Transverse colon (tissue), 4 donors: ENCODE measurements at regions of chrX and their contacts with region 1.

Region 1: DNA sequence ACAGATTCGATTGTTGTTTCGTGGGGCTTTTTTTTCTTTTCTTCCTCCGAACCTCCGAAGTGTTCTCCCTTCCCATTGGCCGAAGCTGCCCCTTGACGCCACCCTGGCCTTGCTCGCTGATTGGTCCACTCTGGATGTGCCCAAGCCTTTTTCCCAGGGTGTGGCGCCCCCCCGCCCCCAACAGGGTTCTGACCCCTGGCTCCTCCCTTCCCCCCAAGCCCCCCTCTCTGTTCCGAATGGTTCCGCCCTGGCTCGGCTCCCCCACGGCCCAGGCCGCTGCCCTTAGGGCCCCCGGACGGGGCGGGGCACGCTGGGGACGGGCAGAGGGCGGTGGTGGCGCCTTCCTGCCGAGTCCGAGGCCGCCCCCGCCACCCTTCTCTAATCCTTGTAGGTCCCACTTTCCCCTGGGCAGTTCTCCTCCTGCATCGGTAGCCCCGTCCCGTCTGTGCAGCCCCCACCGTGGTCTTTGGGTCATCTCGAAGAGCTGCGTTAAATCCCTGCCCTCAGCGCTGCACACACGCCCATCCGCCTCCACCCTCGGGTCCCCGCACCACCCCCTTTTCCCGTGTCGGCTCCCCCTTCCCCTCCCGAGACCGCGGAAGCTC is 25.5 kb downstream of the UTP14A start:
- DNase-seq: peak; percentile 93
- H3K4me3 ChIP-seq: peak overlapping the region; percentile 43 to 66 (median 56)
- H3K27ac ChIP-seq: peak overlapping the region; percentile 85 to 92 (median 90)
- H3K4me1 ChIP-seq: peaks cover 0 to 5% (median 0%) of the 10 kb centered on the region in 4 donors
- H3K27me3 ChIP-seq: no peaks in the 10 kb centered on the region
- CTCF ChIP-seq: no peak
- EP300 ChIP-seq: no peak
- POLR2A ChIP-seq: peak; percentile 71

Region 2: GRCh38 chrX:129982274-129983251 is 51.0 kb after region 1 on chrX and contains the start of gene BCORL1:
- in situ Hi-C with region 1: no loop called
- intact Hi-C with region 1: loop called (anchors 10 kb)
- DNase-seq: peak; percentile 91
- H3K4me3 ChIP-seq: peak within 1 kb of the TSS in 1 of 4 donors; percentile 46
- H3K27ac ChIP-seq: peak within 1 kb of the TSS in 2 of 4 donors; percentile 60 to 89
- H3K4me1 ChIP-seq: peaks cover 0 to 6% (median 2%) of the 10 kb centered on the region in 4 donors
- H3K27me3 ChIP-seq: no peaks in the 10 kb centered on the region
- CTCF ChIP-seq: no peak
- EP300 ChIP-seq: no peak
- POLR2A ChIP-seq: peak; percentile 87
- total RNA-seq, gene BCORL1: 5.6 to 11.6 (median 8.0) TPM